Right ventricle myocardium superior (tissue), 1 donor: ENCODE measurements at regions of chr1 and their contacts with region 1.

Region 1: DNA sequence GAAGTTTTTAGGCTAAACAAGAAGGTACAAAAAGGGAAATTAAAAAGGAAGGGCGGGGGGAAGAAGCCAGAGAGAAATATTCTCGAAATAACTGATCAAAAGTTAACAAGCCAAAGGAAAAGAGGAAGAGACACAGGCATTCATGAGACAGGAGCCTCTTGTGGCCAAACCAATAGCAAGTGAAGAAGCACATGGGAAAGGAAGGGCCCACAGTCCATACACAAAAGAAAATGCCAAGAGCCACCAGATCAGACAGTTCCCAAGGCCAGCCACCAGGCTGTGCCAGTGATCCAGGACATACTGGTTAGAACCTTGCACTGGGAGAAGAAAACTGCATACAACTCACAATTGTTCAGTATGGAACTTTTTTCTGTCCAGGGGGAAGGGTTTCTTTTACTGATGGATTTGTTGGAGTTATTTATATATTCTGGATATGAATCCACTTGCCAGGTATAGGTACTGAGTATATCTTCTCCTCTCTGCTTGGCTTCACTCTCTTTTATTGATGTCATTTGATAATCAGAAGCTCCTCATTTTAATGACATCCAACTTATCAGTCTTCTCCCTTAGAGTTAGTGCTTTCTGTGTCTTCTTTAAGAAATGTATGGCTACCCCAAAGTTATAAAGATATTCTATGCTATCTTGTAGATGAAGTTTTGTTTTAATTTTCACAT is 76.8 kb downstream of the CD46 start:
- DNase-seq: peak; percentile 86
- ATAC-seq: peak; percentile 44

Region 2: DNA sequence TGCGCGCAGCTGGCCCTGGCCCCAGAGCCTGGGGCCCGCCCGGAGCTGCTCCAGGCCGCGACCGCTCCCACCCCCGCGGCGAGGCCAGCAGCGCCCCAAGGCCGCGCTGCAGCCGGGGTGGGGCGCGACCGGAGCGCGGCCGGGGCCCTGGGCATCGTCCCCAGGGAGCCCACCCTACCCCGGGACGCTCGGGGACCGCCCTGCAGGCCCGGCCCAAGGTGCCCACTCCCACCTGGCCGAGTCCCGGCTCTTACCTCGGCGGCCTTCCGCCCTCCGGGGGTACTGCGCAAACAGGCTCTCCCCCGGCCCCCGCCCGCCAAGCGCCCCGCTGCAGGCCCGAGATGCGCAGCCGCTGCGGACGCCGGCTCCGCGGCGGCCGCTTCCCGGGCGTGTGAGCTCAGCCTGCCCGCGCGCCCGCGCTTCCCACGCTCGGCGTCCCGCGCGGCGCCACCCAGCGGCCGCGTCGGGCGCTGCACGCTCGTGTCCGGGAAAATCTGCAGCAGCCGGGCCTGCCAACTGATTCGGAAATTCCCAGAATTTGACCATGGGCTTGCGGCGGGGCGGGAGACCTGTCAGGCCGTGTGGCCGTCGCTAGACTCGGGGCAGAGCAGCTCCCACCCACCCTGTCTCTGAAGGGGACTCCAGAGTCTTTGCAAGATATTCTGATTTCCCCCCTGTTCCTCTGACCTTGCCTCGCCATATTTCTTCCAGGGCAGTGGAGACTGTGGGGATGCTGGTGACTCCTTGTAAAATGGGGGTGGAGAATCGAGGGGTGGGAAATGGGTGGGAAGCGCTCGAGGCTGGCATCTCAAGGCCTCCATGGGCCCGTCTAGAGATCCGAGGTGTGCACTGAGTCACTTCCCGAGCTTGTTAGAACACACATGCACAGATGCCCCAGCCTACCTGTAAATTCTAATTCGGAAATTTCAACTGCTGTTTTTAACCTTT is 40.4 kb after region 1 on chr1:
- intact Hi-C with region 1: loop called (anchors 2 kb)
- DNase-seq: peak; percentile 91
- ATAC-seq: peak; percentile 70

Region 3: DNA sequence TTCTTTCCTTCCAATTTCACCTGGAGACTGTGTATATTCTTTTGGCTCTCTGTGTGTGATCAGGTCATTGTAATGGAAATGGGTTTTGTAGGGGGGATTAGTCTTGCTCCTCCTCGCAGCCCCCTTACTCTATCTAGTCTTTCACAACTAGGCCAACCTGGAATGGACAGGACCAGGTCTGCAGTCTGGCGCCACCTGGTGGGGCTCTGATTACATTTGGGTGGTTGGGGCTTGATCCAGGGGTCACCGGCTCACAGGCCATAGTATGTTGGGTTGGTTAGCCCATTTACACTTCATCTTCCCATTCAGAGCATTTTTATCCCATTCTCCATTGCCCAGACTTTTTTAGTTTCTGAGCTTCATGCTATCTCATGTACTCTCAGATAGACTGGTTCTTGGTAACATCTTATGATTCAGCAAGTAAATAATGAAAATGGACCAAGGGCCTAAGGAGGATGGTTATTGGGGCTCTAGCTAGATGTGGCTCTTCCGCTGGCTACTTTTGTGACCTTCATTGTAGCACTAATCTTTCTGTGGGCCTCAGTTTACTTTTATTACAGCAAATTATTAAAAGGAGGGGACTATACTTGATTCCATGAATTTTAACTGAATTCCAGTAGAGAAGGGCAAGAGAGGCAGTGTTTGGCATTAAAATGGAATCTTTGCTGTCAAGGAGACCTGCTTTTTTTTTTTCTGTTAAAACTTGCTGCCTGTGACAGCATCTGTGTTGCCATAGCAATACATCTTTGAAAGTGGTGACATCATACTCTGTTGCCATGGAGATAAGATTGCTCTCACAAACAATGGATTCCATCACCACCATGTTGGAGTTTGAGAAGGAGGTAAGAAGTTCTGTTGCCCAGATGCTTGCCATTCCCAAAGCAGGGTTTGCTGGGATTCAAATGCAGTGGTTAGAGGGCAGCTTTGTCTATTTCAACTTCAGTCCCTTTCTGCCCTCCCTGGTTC is 265.4 kb after region 1 on chr1:
- intact Hi-C with region 1: no loop called
- DNase-seq: peak; percentile 85
- ATAC-seq: peak; percentile 71